Pancreas (tissue), 10 donors: ENCODE measurements at regions of chr5 and their contacts with region 1.

Region 1: DNA sequence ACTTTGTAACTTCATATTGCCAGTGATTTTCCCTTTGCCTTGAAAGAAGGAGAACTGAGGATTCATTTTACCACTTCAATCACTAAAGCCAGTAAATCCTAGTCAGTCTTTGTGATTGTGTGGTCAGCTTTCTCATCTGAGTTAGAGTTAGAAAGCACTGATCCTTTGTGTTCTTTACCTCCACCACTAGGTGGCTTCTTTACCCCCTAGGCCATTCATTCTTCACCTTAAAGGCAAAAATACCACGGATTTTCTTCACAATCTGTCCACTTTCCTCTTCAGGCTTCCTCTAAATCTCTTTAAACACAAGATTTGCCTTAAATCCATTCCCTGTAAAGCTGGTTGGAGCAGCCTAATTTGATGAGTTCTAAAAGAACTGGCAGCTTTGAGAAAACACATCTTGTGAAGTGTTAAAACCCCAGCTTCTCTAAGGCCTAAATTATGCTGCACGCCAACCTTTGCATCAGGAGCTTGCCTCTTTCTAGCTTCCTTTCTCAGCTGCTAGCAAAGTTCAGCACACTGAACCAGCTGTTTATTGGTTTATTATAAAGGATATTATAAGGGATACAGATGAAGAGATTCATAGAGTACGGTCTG is 20.4 kb downstream of the BDP1 start:
- DNase-seq: no peak
- ATAC-seq: peak in 3 of 4 donors; percentile 47 to 62 (median 54)
- H3K4me3 ChIP-seq: no peak overlapping the region
- H3K27ac ChIP-seq: no peak overlapping the region
- H3K4me1 ChIP-seq: no peaks in the 10 kb centered on the region
- H3K27me3 ChIP-seq: no peaks in the 10 kb centered on the region
- CTCF ChIP-seq: peak in 3 of 4 donors; percentile 23 to 43 (median 35)

Region 2: GRCh38 chr5:71569748-71570509 is 94.0 kb after region 1 on chr5:
- intact Hi-C with region 1: no loop called
- DNase-seq: no peak
- ATAC-seq: no peak
- H3K4me3 ChIP-seq: no peak overlapping the region
- H3K27ac ChIP-seq: no peak overlapping the region
- H3K4me1 ChIP-seq: no peaks in the 10 kb centered on the region
- H3K27me3 ChIP-seq: no peaks in the 10 kb centered on the region
- CTCF ChIP-seq: no peak

Region 3: DNA sequence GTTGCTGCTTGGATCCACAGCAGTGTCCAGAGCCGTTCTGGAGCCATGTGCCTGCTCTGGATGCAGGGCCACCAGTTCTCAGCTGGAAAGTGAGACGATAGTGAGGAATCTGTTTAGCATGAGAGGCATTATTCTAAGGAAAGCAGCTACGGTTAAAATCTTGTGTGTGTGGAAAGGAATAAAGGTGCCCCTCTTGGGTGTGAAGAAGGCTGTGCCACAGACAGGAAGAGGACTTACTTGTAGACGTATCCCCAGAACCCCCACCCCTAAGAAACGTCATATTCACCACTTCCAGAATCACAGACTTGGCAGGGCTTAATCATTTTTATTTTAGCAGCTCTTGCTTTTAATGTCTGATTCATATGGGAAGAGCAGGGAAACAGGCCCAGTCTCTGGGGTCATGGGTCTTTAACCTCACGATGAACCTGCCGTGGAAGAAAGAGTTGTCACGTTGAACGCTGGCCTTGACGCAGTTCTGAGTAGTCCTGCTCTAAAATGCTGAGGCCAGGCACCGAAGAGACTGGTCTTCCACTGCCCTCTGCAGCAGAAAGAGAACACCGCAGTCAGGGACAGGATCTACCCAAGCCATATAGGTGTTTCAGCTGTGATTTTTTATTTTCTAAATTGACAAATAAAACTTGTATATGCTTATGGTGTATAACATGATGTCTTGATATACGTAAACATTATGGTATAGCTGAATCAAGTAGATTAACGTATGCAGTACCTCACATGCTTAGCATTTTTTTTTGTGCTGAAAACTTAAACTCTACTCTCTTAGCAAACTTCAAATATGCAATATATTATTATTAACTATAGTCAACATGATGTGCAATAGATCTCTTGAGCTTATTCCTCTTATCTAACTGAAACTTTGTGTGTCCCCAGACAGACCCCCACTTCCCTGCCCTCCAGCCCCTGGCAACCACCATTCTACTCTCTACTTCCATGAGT is 282.0 kb after region 1 on chr5:
- intact Hi-C with region 1: loop called in 1 of 3 experiments (anchors 10 kb)
- DNase-seq: peak in 4 of 6 donors; percentile 27 to 62 (median 36)
- ATAC-seq: peak; percentile 85 to 100 (median 100)
- H3K4me3 ChIP-seq: peak overlapping the region in 1 of 4 donors; percentile 10
- H3K27ac ChIP-seq: no peak overlapping the region
- H3K4me1 ChIP-seq: peaks cover 0 to 3% (median 0%) of the 10 kb centered on the region in 3 donors
- H3K27me3 ChIP-seq: no peaks in the 10 kb centered on the region
- CTCF ChIP-seq: peak in 3 of 4 donors; percentile 18 to 56 (median 54)

Region 4: DNA sequence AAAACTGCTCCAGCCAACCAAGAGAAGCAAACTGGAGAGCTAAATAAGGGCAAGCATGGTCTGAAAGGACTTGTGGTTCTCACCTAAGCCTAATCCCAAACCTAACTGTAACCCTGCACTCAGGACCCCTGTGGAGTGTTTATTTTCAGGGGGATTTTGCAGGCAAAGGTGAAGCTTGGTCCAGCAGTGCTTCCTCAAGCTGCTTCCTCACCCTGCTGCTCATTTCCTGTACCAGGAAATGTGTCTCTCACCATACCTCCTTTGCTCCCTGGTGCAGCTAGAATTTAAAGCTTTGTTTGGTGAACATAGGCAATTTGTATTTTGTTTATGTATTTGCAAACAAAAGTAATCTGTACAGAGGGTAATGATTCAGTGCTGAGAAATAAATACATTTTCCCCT is 293.4 kb after region 1 on chr5:
- intact Hi-C with region 1: no loop called
- DNase-seq: no peak
- ATAC-seq: no peak
- H3K4me3 ChIP-seq: no peak overlapping the region
- H3K27ac ChIP-seq: no peak overlapping the region
- H3K4me1 ChIP-seq: no peaks in the 10 kb centered on the region
- H3K27me3 ChIP-seq: no peaks in the 10 kb centered on the region
- CTCF ChIP-seq: no peak